Activated T-helper 2 cell treated with anti-CD3 and anti-CD28 coated beads, Interferon-gamma antibody, Interleukin-2, Interleukin-4, amounts not matched to agents 10 μg/mL and 5 μg/mL and 100 μg/mL, durations not matched to agents 14 hours and 24 hours and 36 hours (primary cell): ENCODE measurements at regions of chr2 and their contacts with region 1.

Region 1: DNA sequence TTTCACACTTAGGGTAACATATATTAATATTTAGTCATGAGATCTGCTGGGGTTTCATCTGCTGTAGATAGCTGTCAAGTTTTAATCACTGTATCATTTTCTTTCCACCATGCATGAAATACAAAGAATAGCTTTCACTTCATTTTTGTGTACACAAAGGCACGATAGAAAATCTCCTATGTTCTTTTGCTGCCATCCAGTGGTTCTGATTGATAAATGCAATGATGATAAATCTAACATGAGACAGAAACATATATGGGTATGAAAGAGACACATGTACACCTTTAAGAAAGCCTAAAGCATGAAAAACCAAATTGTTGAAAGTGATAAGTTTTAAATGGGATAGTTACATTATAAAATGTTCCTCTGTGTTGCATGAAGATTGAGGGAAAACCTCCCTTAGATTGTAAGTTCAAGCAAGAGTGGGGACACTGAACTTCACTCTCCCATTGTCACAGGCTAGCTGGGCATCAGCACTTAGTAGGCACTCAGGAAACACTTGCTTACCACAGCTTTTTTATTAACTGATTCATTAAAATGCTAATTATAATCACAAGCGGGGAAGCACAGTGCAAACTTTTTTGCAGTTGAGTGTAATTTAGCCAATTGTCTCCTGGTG is 31.2 kb downstream of the C1D start:
- DNase-seq: no peak
- H3K4me3 Mint-ChIP-seq: no peak overlapping the region
- H3K27ac Mint-ChIP-seq: no peak overlapping the region
- H3K4me1 Mint-ChIP-seq: no peaks in the 10 kb centered on the region
- H3K27me3 Mint-ChIP-seq: peaks cover 10% of the 10 kb centered on the region

Region 2: GRCh38 chr2:66445925-66446860 is 1585.5 kb before region 1 on chr2:
- intact Hi-C with region 1: loop called (anchors 10 kb)
- DNase-seq: no peak
- H3K4me3 Mint-ChIP-seq: no peak overlapping the region
- H3K27ac Mint-ChIP-seq: no peak overlapping the region
- H3K4me1 Mint-ChIP-seq: no peaks in the 10 kb centered on the region
- H3K27me3 Mint-ChIP-seq: peaks cover 35% of the 10 kb centered on the region

Region 3: GRCh38 chr2:67997528-67997900 is 34.1 kb before region 1 on chr2:
- intact Hi-C with region 1: no loop called
- DNase-seq: no peak
- H3K4me3 Mint-ChIP-seq: no peak overlapping the region
- H3K27ac Mint-ChIP-seq: no peak overlapping the region
- H3K4me1 Mint-ChIP-seq: no peaks in the 10 kb centered on the region
- H3K27me3 Mint-ChIP-seq: peaks cover 1% of the 10 kb centered on the region